ENCODE measurements at regions of chr20 and their contacts with region 1.

Region 1: DNA sequence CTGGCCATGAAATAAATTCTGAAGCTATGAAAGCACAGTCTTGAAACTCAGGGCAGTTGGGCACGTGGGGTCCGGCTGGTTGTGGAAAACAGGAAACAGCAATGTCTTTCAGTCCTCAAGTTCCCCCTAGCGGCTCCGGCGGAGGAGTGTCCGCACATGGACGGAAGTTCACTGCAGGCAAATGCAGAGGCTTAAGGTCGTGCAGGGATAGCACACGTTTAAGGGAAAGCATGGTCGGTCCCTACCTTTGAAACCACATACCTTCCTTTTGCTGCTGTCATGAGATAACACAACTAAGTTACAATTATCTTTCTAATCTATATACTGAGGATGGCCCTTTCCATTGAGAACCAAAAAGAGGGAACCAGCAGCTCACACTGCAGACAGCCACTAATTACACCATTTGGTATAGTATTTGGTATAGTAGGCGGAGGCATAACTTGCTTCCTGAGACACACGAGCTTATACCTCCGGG is 52.6 kb upstream of the NFATC2 start:
- DNase-seq: peak; percentile 86 to 89 (median 87)
- ATAC-seq: peak; percentile 99 to 100 (median 99)
- H3K4me3 ChIP-seq: no peak overlapping the region
- H3K27ac ChIP-seq: no peak overlapping the region
- H3K4me1 ChIP-seq: peaks cover 0 to 10% (median 0%) of the 10 kb centered on the region in 4 donors
- H3K27me3 ChIP-seq: no peaks in the 10 kb centered on the region
- CTCF ChIP-seq: peak; percentile 83 to 88 (median 86)
- POLR2A ChIP-seq: no peak

Region 2: DNA sequence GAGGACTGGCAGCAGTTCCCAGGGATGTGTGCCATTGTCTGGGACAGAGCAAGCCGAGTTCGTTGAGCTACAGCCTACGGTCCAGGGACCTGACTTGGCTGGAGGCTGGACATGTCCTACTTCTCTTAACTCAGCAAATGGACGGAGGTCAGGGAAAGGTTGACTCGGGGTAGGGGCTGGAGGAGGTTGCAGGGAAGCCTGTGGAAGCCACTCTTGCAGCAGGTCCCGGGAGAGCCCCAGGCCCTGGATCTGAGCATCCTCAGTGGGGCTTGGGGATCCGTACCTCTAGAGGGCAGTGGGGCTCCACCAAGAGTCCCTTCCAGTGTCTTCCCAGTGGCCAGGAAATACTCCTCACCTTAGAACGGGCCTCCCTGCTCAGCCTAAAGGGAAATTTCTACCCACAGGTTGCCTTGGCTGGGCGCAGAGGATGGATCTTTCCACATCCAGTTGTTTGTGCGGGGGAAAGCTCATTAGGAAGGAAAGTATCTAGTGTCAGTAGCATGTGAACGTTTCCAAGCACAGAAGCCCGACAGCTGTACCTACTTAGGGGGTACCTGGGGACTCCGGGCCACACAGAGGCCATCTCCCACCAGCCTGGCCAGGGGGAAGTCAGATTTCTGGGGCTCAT is 222.8 kb before region 1 on chr20:
- intact Hi-C with region 1: loop called (anchors 5 kb)
- DNase-seq: peak; percentile 61 to 71 (median 66)
- ATAC-seq: peak; percentile 94 to 98 (median 96)
- H3K4me3 ChIP-seq: no peak overlapping the region
- H3K27ac ChIP-seq: no peak overlapping the region
- H3K4me1 ChIP-seq: no peaks in the 10 kb centered on the region
- H3K27me3 ChIP-seq: no peaks in the 10 kb centered on the region
- CTCF ChIP-seq: peak; percentile 81 to 86 (median 82)
- POLR2A ChIP-seq: no peak

Region 3: DNA sequence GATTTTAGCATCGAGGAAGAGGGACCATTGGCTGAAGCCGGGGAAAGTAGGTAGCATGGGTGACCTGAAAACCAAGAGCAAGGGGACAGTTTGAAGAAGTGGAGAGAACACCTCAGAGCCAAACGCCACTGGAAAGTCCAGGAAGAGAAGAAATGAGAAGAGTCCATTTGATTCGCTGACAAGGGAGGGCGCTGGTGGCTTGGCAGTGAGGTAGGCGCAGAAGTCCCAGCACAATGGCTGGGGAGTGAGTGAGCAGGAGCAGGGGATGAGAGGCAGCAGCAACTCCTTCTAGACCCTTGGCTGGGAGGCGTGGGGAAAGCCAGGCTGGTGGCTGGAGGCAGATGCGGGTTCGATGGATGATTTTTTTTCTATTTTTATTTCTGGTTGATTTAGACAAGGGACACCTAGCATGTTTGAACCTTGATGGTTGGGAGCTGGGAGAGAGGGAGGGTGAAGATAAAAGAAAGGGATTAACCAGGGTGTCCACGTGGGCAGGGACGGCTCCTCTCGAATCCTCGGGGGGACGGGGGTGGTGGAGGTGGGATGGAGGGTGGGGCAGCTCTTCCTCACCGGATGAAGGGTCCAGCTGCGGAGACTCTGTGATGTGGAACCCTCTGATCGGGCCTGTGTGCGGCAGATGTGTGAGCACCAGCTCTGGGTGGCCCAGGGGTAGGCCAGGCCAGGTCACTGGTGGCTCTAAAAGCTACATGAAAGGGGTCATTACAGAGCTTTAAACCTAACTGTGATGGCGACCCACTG is 216.7 kb before region 1 on chr20:
- intact Hi-C with region 1: loop called (anchors 5 kb)
- DNase-seq: no peak
- ATAC-seq: peak in 3 of 4 donors; percentile 24 to 34 (median 30)
- H3K4me3 ChIP-seq: no peak overlapping the region
- H3K27ac ChIP-seq: no peak overlapping the region
- H3K4me1 ChIP-seq: no peaks in the 10 kb centered on the region
- H3K27me3 ChIP-seq: no peaks in the 10 kb centered on the region
- CTCF ChIP-seq: peak in 3 of 4 donors; percentile 9 to 21 (median 13)
- POLR2A ChIP-seq: no peak

Region 4: DNA sequence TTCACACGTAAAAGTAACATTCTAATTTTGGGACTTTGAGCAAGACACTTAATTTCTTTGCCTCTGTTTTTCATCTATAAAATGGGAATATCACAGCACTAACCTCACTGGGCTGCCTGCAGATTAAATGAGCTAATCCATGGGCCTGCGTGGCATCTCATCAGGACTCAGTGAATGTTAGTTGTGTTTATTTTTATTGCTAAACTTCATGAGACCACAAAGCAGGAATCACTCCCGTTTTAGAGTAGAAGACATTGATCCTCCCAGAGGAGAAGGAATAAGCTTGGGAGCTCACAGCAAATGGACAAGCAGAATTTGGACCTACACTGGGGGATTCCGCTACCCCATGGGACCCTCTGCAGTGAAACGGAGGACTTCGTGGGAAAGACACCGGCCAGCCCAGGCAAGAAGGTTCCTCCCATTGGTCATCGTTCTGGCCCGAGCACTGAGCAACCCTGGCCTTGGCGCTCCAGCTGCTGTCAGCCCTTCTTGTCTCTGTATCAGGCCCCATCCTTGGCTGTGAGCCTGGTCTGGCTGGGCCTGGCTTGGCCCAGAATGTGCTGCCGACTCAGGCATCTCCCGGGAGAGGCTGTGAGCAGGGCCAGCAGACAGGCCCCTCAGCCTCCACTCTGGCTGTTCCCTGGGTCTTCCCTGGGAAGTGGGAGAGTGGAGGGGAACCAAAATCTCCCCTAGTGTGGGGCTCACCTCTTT is 132.4 kb before region 1 on chr20:
- intact Hi-C with region 1: no loop called
- DNase-seq: peak; percentile 52 to 73 (median 69)
- ATAC-seq: peak; percentile 62 to 90 (median 72)
- H3K4me3 ChIP-seq: no peak overlapping the region
- H3K27ac ChIP-seq: no peak overlapping the region
- H3K4me1 ChIP-seq: no peaks in the 10 kb centered on the region
- H3K27me3 ChIP-seq: no peaks in the 10 kb centered on the region
- CTCF ChIP-seq: no peak
- POLR2A ChIP-seq: no peak

Region 5: GRCh38 chr20:51860111-51860882 is 265.2 kb after region 1 on chr20:
- intact Hi-C with region 1: no loop called
- DNase-seq: no peak
- ATAC-seq: no peak
- H3K4me3 ChIP-seq: no peak overlapping the region
- H3K27ac ChIP-seq: no peak overlapping the region
- H3K4me1 ChIP-seq: no peaks in the 10 kb centered on the region
- H3K27me3 ChIP-seq: no peaks in the 10 kb centered on the region
- CTCF ChIP-seq: no peak
- POLR2A ChIP-seq: no peak

Measured in right lobe of liver (tissue), 6 donors.